Right lobe of liver (tissue), 6 donors: ENCODE measurements at regions of chr6 and their contacts with region 1.

Region 1: GRCh38 chr6:12233693-12234571 is 56.2 kb upstream of the EDN1 start:
- DNase-seq: no peak
- ATAC-seq: peak; percentile 90 to 95 (median 92)
- H3K4me3 ChIP-seq: no peak overlapping the region
- H3K27ac ChIP-seq: no peak overlapping the region
- H3K4me1 ChIP-seq: peaks cover 0 to 30% (median 3%) of the 10 kb centered on the region in 4 donors
- H3K27me3 ChIP-seq: no peaks in the 10 kb centered on the region
- CTCF ChIP-seq: peak; percentile 82 to 92 (median 84)
- POLR2A ChIP-seq: no peak

Region 2: GRCh38 chr6:11653028-11653583 is 580.8 kb before region 1 on chr6:
- intact Hi-C with region 1: loop called in 1 of 2 experiments (anchors 10 kb)
- DNase-seq: peak in 1 of 3 donors; percentile 49
- ATAC-seq: peak; percentile 48 to 70 (median 58)
- H3K4me3 ChIP-seq: no peak overlapping the region
- H3K27ac ChIP-seq: no peak overlapping the region
- H3K4me1 ChIP-seq: peaks cover 0 to 12% (median 0%) of the 10 kb centered on the region in 4 donors
- H3K27me3 ChIP-seq: no peaks in the 10 kb centered on the region
- CTCF ChIP-seq: no peak
- POLR2A ChIP-seq: no peak